ENCODE measurements at regions of chr1 and their contacts with region 1.

Region 1: DNA sequence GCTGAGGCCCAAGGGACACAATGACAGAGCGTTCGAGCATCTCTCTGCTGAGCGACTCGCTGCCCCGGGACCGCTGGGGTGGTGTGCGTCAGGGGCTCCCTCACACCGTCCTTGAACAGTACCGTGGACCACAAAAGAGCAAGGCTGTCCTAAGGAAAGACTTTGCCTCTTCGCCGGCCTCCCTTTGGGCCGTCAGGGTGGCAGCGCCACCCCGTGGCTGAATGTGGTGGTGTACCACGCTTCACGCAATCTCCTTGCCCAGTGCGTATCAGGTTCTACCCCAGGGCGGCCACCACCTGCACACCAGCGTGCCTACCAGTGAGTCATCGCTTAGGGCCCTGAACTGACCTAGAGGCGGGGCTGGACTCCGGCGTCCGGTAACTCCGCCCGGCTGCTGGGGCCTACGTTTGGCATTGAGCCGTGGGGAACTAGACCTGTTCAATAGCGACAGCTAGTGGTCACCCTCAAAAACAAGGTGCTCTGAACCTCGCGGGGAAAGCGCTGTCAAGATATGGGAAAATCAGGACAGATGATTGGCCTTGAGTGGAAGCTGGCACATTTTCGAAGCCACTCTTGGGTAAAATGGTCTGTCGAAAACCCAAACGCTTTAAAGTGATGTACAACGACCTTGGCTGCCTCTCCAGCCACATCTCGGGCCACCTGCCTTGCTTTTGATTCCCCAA is 8.1 kb upstream of the TRAF3IP3 start:
- DNase-seq: peak; percentile 93 to 96
- H3K4me3 ChIP-seq: no peak overlapping the region
- H3K4me3 Mint-ChIP-seq: peak overlapping the region; percentile 51
- H3K27ac Mint-ChIP-seq: peak overlapping the region; percentile 53
- H3K4me1 ChIP-seq: peaks cover 19% of the 10 kb centered on the region
- H3K4me1 Mint-ChIP-seq: peaks cover 16% of the 10 kb centered on the region
- H3K27me3 ChIP-seq: no peaks in the 10 kb centered on the region
- H3K27me3 Mint-ChIP-seq: no peaks in the 10 kb centered on the region
- CTCF ChIP-seq: peak; percentile 62 to 83

Region 2: DNA sequence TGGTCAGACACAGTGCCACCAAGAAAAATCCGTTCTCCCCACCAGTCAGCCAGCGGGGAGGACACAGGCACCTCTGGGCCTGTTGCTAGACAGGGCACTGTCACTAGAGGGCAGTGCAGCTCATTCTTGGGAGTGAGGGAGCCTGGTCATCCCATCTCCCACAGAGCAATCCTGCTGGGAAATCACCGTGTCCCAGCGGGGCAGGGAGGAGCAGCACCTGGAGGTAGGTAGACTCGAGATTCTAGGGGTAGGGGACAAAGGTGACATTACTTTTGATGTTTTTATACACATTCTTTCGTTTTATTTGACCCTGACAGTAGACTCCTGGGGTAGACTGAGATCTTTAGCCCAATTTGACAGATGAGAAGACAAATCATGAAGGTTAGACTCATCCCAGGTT is 170.9 kb before region 1 on chr1:
- CTCF ChIA-PET with region 1: interaction called, 9 read pairs
- POLR2A ChIA-PET with region 1: no interaction called
- intact Hi-C with region 1: loop called (anchors 1 kb)
- DNase-seq: peak; percentile 83 to 89
- H3K4me3 ChIP-seq: no peak overlapping the region
- H3K4me3 Mint-ChIP-seq: no peak overlapping the region
- H3K27ac Mint-ChIP-seq: no peak overlapping the region
- H3K4me1 ChIP-seq: no peaks in the 10 kb centered on the region
- H3K4me1 Mint-ChIP-seq: peaks cover 6% of the 10 kb centered on the region
- H3K27me3 ChIP-seq: no peaks in the 10 kb centered on the region
- H3K27me3 Mint-ChIP-seq: peaks cover 11% of the 10 kb centered on the region
- CTCF ChIP-seq: peak; percentile 84 to 95

Region 3: GRCh38 chr1:209601809-209602657 is 145.7 kb before region 1 on chr1:
- CTCF ChIA-PET with region 1: no interaction called
- POLR2A ChIA-PET with region 1: no interaction called
- intact Hi-C with region 1: loop called (anchors 1 kb)
- DNase-seq: peak in 1 of 2 experiments; percentile 47
- H3K4me3 ChIP-seq: no peak overlapping the region
- H3K4me3 Mint-ChIP-seq: no peak overlapping the region
- H3K27ac Mint-ChIP-seq: no peak overlapping the region
- H3K4me1 ChIP-seq: no peaks in the 10 kb centered on the region
- H3K4me1 Mint-ChIP-seq: no peaks in the 10 kb centered on the region
- H3K27me3 ChIP-seq: no peaks in the 10 kb centered on the region
- H3K27me3 Mint-ChIP-seq: peaks cover 8% of the 10 kb centered on the region
- CTCF ChIP-seq: peak; percentile 75 to 80

Region 4: DNA sequence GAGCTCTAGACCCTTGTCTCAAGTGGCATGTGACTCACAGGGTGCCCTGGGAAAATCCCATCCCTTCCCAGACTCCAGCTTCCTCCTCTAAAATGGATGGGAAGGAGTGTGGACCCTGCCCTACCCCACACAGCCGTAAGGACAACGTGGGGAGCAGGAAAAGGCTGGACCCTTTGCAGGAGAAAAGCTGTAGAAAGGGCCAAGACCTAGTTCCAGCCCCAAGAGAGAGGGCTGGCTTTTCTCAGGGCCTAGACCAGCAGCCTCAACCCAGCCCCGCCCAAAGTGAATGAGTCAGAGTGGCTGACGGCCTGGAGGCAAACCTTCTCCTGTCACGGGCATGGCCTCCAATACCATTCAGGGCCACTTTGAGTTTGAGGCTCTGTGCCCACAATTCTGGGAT is 96.6 kb before region 1 on chr1:
- CTCF ChIA-PET with region 1: no interaction called
- POLR2A ChIA-PET with region 1: no interaction called
- intact Hi-C with region 1: loop called (anchors 1 kb)
- DNase-seq: peak; percentile 68 to 75
- H3K4me3 ChIP-seq: peak overlapping the region; percentile 57
- H3K4me3 Mint-ChIP-seq: peak overlapping the region; percentile 96
- H3K27ac Mint-ChIP-seq: peak overlapping the region; percentile 88
- H3K4me1 ChIP-seq: peaks cover 70% of the 10 kb centered on the region
- H3K4me1 Mint-ChIP-seq: peaks cover 56% of the 10 kb centered on the region
- H3K27me3 ChIP-seq: no peaks in the 10 kb centered on the region
- H3K27me3 Mint-ChIP-seq: no peaks in the 10 kb centered on the region
- CTCF ChIP-seq: no peak

Region 5: DNA sequence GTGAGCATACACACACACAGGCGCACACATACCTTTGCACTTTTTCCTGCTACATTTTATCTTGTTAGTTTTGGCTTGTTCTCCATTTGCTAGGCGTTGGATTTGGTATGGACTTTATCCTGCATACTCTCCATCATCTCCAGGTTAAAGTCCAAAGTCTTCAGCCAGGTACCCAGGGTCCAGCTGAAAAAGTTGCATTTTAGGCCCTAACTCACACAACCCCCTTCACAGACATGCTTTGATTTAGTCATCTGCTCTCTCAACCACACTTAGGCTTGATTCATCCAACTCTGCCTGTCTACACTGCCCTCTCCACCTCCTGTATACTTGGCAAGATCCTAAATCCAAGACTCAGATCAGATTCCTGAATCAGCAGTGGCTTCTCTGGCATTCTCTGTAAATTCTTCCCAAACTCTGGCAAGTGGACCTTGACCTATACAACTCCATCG is 84.8 kb before region 1 on chr1:
- CTCF ChIA-PET with region 1: no interaction called
- POLR2A ChIA-PET with region 1: no interaction called
- intact Hi-C with region 1: no loop called
- DNase-seq: no peak
- H3K4me3 ChIP-seq: no peak overlapping the region
- H3K4me3 Mint-ChIP-seq: peak overlapping the region; percentile 50
- H3K27ac Mint-ChIP-seq: peak overlapping the region; percentile 23
- H3K4me1 ChIP-seq: peaks cover 38% of the 10 kb centered on the region
- H3K4me1 Mint-ChIP-seq: peaks cover 34% of the 10 kb centered on the region
- H3K27me3 ChIP-seq: no peaks in the 10 kb centered on the region
- H3K27me3 Mint-ChIP-seq: no peaks in the 10 kb centered on the region
- CTCF ChIP-seq: no peak

Region 6: GRCh38 chr1:209723756-209724693 is 23.7 kb before region 1 on chr1:
- CTCF ChIA-PET with region 1: interaction called, 3 read pairs
- POLR2A ChIA-PET with region 1: no interaction called
- intact Hi-C with region 1: loop called (anchors 2 kb)
- DNase-seq: no peak
- H3K4me3 ChIP-seq: no peak overlapping the region
- H3K4me3 Mint-ChIP-seq: no peak overlapping the region
- H3K27ac Mint-ChIP-seq: no peak overlapping the region
- H3K4me1 ChIP-seq: no peaks in the 10 kb centered on the region
- H3K4me1 Mint-ChIP-seq: no peaks in the 10 kb centered on the region
- H3K27me3 ChIP-seq: no peaks in the 10 kb centered on the region; the same call in 1 of the 2 replicates
- H3K27me3 Mint-ChIP-seq: peaks cover 19% of the 10 kb centered on the region
- CTCF ChIP-seq: no peak

Region 7: DNA sequence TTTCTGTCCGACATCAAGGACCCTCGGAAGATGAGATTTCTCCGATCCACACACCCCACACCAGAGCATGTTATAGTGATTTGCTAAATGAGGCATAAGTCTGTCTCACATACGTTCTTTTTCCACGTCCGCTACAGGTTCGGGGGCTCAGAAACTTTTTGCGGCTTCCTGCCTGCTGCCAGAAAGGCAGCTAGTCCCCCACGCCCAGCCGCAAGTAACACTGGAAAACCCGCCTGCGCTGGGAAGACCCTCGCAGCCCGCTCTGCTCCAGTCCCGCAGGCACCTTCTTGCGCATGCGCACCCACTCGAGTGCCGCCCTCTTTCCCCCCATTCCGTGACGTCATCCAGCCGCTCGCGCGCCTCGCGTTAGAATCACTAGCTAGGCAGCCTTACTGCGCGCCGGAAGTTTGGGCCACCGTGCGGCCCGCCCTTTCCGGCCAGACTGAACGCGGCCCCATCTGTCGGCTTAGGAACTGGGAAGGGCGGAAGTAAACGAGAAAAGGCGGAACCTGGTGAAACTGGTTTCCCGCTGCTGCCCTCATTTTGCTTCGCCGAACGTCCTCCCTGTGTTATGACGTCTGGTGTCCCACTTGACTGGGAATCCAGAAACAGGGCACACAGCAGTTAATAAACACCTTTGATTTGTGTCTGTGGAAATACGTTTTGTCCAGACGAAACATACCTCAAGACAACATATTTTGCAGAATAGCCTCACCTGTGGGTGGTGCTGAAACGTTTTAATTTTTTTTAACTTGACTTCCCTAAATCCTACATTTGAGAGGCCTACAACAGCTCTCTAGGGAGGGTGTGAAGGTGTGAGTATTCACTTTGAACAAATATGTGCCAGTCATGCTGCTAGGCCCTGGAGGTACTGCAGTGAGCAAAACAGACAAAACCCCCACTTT is 36.8 kb after region 1 on chr1 and contains the start of gene C1orf74:
- CTCF ChIA-PET with region 1: interaction called, 3 read pairs
- POLR2A ChIA-PET with region 1: interaction called, 5 read pairs
- intact Hi-C with region 1: loop called (anchors 1 kb)
- DNase-seq: peak; percentile 98 to 99
- H3K4me3 ChIP-seq: peak within 1 kb of the TSS; percentile 73
- H3K4me3 Mint-ChIP-seq: peak within 1 kb of the TSS; percentile 90
- H3K27ac Mint-ChIP-seq: peak within 1 kb of the TSS; percentile 96
- H3K4me1 ChIP-seq: peaks cover 31% of the 10 kb centered on the region
- H3K4me1 Mint-ChIP-seq: peaks cover 19% of the 10 kb centered on the region
- H3K27me3 ChIP-seq: no peaks in the 10 kb centered on the region
- H3K27me3 Mint-ChIP-seq: no peaks in the 10 kb centered on the region
- CTCF ChIP-seq: no peak
- total RNA-seq, gene C1orf74: 4.5 TPM in 2 replicates

Region 8: GRCh38 chr1:209797978-209798639 is 50.4 kb after region 1 on chr1:
- CTCF ChIA-PET with region 1: no interaction called
- POLR2A ChIA-PET with region 1: no interaction called
- intact Hi-C with region 1: no loop called
- DNase-seq: no peak
- H3K4me3 ChIP-seq: no peak overlapping the region
- H3K4me3 Mint-ChIP-seq: no peak overlapping the region
- H3K27ac Mint-ChIP-seq: no peak overlapping the region
- H3K4me1 ChIP-seq: peaks cover 14% of the 10 kb centered on the region
- H3K4me1 Mint-ChIP-seq: peaks cover 8% of the 10 kb centered on the region
- H3K27me3 ChIP-seq: no peaks in the 10 kb centered on the region
- H3K27me3 Mint-ChIP-seq: no peaks in the 10 kb centered on the region
- CTCF ChIP-seq: peak in 1 of 2 experiments; percentile 49